ENCODE measurements at regions of chr1 and their contacts with region 1.

Region 1: DNA sequence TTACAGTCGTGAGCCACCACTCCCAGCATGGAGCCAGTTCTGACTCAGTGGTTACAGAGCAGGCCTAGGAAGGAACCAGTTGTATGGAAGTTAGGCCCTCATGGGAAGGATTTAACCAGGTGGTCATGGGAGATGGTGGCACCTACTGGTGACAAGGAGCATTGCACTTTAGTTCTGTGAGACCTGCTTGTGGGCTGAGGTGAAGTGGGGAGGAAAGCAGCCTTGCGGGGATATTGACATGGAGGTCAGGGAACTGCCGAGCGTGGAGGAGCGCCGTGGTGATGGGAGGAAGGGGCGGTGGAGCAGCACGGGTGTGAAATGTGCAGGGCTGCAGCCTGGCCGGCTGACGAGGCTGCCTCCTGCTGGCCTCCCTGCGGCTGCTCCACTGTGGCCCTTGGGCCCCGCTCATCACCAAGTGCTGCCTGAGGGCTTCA is 100.4 kb downstream of the GALNT2 start:
- DNase-seq: no peak
- ATAC-seq: peak; percentile 32
- H3K4me3 Mint-ChIP-seq: no peak overlapping the region
- H3K27ac Mint-ChIP-seq: peak overlapping the region; percentile 75
- H3K4me1 Mint-ChIP-seq: peaks cover 79% of the 10 kb centered on the region
- H3K27me3 Mint-ChIP-seq: no peaks in the 10 kb centered on the region
- CTCF ChIP-seq: no peak

Region 2: GRCh38 chr1:229661022-229661877 is 506.2 kb before region 1 on chr1:
- CTCF ChIA-PET with region 1: interaction called, 6 read pairs
- POLR2A ChIA-PET with region 1: interaction called, 6 read pairs
- intact Hi-C with region 1: loop called (anchors 1 kb)
- DNase-seq: peak; percentile 70
- ATAC-seq: peak; percentile 87
- H3K4me3 Mint-ChIP-seq: no peak overlapping the region
- H3K27ac Mint-ChIP-seq: peak overlapping the region; percentile 50
- H3K4me1 Mint-ChIP-seq: peaks cover 11% of the 10 kb centered on the region
- H3K27me3 Mint-ChIP-seq: no peaks in the 10 kb centered on the region
- CTCF ChIP-seq: peak; percentile 21

Region 3: DNA sequence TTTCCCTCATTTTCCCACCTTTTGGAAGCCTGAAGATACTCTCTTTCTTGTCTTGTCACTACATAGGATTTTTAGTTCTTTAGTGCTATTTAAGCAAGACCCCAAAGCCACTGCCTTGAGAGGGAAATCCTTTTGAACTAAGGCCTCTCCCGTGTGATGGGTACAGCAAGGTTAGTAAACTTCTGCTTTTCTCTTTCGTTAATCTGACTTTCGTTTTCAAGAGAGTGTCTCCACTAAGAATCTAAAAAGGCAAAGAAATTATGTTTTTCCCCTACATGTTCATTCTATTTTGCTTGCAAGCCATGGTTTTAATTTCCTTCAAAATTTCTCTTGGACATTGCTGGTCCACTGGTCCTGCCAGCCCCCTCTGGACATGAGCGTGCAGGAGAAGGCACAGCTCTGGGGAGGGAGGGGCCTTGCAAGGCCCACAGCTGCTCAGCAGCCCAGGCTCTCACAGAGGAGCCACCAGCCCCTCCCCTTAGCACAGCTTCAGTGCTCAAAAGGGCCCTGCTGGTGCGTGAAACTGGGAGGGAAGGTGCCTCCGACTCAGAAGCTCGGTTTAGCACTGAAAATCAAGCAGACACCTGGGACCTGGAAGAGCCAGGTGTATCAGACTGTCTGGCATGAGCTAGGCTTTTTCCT is 311.3 kb before region 1 on chr1:
- CTCF ChIA-PET with region 1: interaction called, 3 read pairs
- POLR2A ChIA-PET with region 1: no interaction called
- intact Hi-C with region 1: loop called (anchors 5 kb)
- DNase-seq: peak; percentile 55
- ATAC-seq: peak; percentile 99
- H3K4me3 Mint-ChIP-seq: peak overlapping the region; percentile 90
- H3K27ac Mint-ChIP-seq: peak overlapping the region; percentile 97
- H3K4me1 Mint-ChIP-seq: peaks cover 36% of the 10 kb centered on the region
- H3K27me3 Mint-ChIP-seq: no peaks in the 10 kb centered on the region
- CTCF ChIP-seq: no peak

Region 4: GRCh38 chr1:230149751-230150584 is 17.5 kb before region 1 on chr1:
- CTCF ChIA-PET with region 1: interaction called, 9 read pairs
- POLR2A ChIA-PET with region 1: interaction called, 6 read pairs
- intact Hi-C with region 1: loop called (anchors 1 kb)
- DNase-seq: no peak
- ATAC-seq: peak; percentile 81
- H3K4me3 Mint-ChIP-seq: peak overlapping the region; percentile 80
- H3K27ac Mint-ChIP-seq: peak overlapping the region; percentile 94
- H3K4me1 Mint-ChIP-seq: peaks cover 71% of the 10 kb centered on the region
- H3K27me3 Mint-ChIP-seq: no peaks in the 10 kb centered on the region
- CTCF ChIP-seq: no peak

Region 5: DNA sequence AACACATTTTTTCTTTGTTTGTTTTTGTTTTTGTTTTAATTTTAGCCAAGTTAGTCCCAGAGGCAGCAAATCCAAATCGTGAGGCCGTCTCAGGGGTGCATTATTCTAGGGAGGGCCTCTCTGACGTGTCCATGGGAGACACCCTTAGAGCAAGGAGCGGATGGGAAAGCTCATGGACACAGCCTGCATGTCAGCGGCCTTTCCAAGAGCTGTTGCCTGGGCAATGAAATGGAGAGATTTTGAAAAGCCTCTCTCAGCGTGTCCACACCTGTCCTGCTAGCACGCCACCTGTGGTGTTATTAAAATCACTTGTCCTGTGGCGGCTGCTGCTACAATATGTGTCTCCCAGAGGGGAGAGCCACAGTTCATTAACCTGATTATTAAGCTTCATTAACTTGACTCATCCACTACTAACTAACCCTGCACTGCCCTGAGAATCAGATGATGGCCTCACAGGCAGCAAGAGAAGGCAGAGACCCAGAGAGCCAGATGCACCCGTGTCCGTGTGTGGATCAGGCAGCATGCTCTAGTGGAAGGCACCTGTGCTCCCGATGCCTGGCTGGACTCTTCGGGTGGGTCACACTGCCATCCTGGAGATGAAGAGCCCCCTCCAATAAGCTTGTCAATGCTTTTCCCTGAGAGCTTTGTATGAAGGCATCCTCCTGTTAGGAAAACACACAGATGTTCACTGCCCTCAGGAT is 125.4 kb after region 1 on chr1:
- CTCF ChIA-PET with region 1: no interaction called
- POLR2A ChIA-PET with region 1: no interaction called
- intact Hi-C with region 1: no loop called
- DNase-seq: no peak
- ATAC-seq: no peak
- H3K4me3 Mint-ChIP-seq: no peak overlapping the region
- H3K27ac Mint-ChIP-seq: peak overlapping the region; percentile 59
- H3K4me1 Mint-ChIP-seq: peaks cover 58% of the 10 kb centered on the region
- H3K27me3 Mint-ChIP-seq: no peaks in the 10 kb centered on the region
- CTCF ChIP-seq: no peak

Region 6: GRCh38 chr1:230303822-230304221 is 136.4 kb after region 1 on chr1:
- CTCF ChIA-PET with region 1: interaction called, 4 read pairs
- POLR2A ChIA-PET with region 1: no interaction called
- intact Hi-C with region 1: loop called (anchors 5 kb)
- DNase-seq: no peak
- ATAC-seq: no peak
- H3K4me3 Mint-ChIP-seq: no peak overlapping the region
- H3K27ac Mint-ChIP-seq: no peak overlapping the region
- H3K4me1 Mint-ChIP-seq: peaks cover 65% of the 10 kb centered on the region
- H3K27me3 Mint-ChIP-seq: no peaks in the 10 kb centered on the region
- CTCF ChIP-seq: no peak